ENCODE measurements at regions of chr15 and their contacts with region 1.

Region 1: DNA sequence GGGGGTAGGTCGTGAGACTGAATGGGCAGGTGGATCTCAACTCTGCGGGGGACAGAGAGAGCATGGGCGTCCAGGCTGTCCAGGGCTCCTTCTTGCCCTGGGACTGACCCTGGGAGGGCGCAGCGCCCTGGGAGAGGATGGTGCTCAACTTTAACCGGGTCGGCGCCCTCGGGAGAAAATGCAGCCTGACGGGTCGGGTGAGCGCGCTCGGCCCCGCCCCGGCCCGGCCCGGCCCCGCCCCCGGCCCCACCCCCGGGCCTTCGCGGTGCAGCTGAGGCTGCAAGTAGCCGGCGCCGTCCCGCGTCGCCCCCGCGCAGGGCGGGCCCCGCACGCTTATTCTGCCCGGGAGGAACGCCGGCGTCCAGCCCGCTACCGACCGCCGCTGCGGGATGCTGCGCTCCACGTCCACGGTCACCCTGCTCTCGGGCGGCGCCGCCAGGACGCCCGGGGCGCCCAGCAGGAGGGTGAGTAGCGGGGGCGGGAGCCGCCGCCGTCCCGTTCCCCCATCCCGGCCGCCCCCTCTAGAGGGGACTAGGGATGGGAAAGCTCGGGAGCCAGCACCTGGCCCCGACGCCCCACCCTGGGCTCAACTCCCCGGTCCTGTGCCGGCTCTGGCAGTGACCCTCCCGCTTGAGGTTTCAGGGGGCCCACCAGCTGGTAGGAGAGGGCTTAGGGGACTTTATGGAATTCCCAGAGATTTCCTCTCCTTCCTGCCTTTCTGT is at the start of gene MYZAP:
- DNase-seq: peak; percentile 81
- total RNA-seq, gene MYZAP: 658 TPM

Region 2: DNA sequence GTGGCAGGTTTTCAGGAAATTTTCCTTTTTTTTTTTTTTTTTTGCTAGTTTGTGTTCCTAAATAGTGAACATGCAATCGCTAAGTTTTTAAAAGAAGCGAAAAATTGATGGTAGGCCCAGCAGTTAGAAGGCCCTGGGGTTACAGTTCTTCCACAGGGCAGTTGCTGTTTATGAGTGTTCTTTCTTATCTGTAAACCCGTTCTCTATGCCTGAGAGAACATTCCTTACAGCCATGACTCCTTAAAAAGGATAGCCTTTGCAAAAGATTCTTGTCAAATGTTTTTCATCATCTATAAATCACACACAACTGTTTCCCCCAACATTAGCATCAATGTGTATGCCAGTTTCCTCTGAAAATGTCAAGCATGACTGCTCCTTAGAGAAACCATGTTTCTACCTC is 23.9 kb before region 1 on chr15:
- intact Hi-C with region 1: loop called (anchors 2 kb)
- DNase-seq: no peak

Region 3: DNA sequence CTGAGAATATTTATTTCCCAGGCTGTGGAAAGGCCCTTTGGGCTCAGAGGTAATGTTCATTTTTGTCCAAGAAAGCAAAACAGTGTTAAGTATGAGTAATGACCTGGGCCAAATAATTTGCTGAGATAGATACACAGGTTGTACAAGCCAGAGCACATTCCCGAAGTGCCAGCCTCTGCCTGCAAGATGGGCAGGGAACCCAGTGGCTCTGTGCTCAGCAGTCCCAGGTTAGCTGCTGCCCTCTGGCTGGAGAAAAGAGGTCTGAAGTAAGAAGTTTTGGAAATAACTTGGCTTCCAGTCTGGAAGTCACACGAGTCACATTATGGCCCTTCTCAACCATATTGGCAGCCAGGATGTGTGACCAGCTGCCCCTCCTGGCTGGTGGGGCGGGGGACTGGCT is 20.1 kb after region 1 on chr15:
- intact Hi-C with region 1: loop called (anchors 2 kb)
- DNase-seq: peak; percentile 72

Region 4: DNA sequence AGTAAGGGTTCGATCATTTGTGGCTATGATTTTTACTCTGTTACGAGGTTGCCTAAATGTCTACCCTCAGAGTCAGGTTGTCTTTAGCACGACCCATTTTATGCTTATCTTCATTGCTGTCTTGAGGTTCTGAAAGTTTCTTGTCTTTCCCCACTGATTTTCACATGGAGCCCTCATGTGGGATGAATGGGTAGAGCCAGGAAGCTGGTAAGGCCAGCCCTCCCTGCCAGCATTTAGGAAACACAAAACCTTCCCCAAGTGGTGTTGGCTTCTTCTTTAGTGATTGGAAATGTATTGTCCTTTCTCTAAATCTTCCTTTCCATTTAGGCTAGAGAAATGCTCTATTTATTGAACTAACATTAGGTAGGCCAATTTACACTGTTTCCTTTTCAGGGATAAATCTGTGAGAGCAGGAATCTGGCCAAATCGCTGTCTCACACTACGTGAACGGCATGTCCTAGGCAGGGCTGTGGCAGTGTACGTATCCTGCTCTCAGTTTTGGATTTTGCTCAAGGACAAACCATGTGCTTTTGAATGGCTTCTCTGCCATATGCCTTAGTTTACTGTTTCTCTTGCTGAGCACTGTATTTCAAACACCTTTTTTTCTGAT is 43.6 kb after region 1 on chr15:
- intact Hi-C with region 1: loop called (anchors 2 kb)
- DNase-seq: no peak

Region 5: GRCh38 chr15:57654153-57654852 is 62.5 kb after region 1 on chr15:
- intact Hi-C with region 1: no loop called
- DNase-seq: no peak

Measured in cardiac septum (tissue), 1 donor.